CD8-positive, alpha-beta T cell (primary cell): ENCODE measurements at regions of chr1 and their contacts with region 1.

Region 1: DNA sequence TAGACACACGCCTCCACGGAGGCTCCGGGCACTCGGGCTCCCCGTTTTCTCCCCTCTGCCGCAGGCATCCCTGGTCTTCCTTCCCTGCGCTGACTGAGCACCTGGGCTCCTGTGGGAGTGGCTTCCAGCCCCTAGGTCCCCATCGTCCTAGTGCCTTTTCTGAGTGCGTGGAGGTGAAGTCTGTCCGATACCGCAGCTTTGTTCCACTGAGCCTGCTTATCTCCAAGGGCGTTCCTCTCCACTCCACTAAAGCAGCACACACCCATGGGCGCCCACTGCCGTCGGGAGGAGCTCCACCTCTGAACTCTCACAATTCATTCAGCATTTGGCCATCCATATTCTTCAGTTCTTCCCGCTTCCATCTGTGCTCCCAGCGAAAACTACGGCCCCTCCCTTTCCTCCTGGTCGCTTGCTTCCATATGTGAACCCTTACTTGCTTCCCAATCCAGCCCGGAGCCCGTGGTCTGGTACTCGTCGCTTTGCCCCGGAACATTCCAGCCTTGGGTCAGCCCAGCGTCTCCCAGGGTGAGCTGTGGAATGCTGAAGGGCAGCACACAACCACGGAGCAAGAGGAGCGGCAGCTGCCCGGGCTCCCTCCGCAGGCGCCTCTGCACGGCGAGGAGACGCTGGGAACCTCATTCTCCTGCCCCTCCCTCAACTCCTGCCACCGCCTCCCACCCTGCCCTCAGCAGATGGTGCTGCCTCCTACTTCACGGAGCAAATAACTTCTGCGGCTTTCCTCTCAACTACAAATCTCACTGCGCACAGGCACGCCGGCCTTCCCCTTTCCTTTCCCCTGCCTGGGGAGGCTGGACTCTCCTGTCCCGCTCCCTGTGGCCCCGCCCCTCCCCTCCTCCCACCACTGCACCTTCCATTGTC is 27.5 kb downstream of the ATP8B2 start:
- DNase-seq: peak in 7 of 9 experiments; percentile 21 to 72 (median 55)
- ATAC-seq: peak; percentile 73
- H3K4me3 ChIP-seq: peak overlapping the region; percentile 45 to 63
- H3K4me3 Mint-ChIP-seq: peak overlapping the region; percentile 91
- H3K27ac ChIP-seq: no peak overlapping the region
- H3K27ac Mint-ChIP-seq: peak overlapping the region; percentile 81
- H3K4me1 ChIP-seq: peaks cover 27% of the 10 kb centered on the region
- H3K4me1 Mint-ChIP-seq: peaks cover 44% of the 10 kb centered on the region
- H3K27me3 ChIP-seq: no peaks in the 10 kb centered on the region
- H3K27me3 Mint-ChIP-seq: no peaks in the 10 kb centered on the region
- CTCF ChIP-seq: no peak

Region 2: GRCh38 chr1:154442006-154442740 is 89.4 kb after region 1 on chr1:
- CTCF ChIA-PET with region 1: interaction called, 4 read pairs
- POLR2A ChIA-PET with region 1: no interaction called
- intact Hi-C with region 1: loop called in 1 of 2 experiments (anchors 1 kb)
- DNase-seq: peak in 3 of 9 experiments; percentile 19 to 42 (median 30)
- ATAC-seq: no peak
- H3K4me3 ChIP-seq: no peak overlapping the region
- H3K4me3 Mint-ChIP-seq: peak overlapping the region; percentile 60
- H3K27ac ChIP-seq: peak overlapping the region in 1 of 2 experiments; percentile 22
- H3K27ac Mint-ChIP-seq: peak overlapping the region; percentile 89
- H3K4me1 ChIP-seq: peaks cover 58% of the 10 kb centered on the region
- H3K4me1 Mint-ChIP-seq: peaks cover 63% of the 10 kb centered on the region
- H3K27me3 ChIP-seq: no peaks in the 10 kb centered on the region
- H3K27me3 Mint-ChIP-seq: no peaks in the 10 kb centered on the region
- CTCF ChIP-seq: peak; percentile 24

Region 3: GRCh38 chr1:154546264-154547063 is 193.6 kb after region 1 on chr1:
- CTCF ChIA-PET with region 1: interaction called, 5 read pairs
- POLR2A ChIA-PET with region 1: no interaction called
- intact Hi-C with region 1: loop called in 1 of 2 experiments (anchors 10 kb)
- DNase-seq: peak; percentile 10 to 72 (median 52)
- ATAC-seq: peak; percentile 97
- H3K4me3 ChIP-seq: no peak overlapping the region
- H3K4me3 Mint-ChIP-seq: no peak overlapping the region
- H3K27ac ChIP-seq: no peak overlapping the region
- H3K27ac Mint-ChIP-seq: no peak overlapping the region
- H3K4me1 ChIP-seq: no peaks in the 10 kb centered on the region
- H3K4me1 Mint-ChIP-seq: peaks cover 15% of the 10 kb centered on the region
- H3K27me3 ChIP-seq: no peaks in the 10 kb centered on the region
- H3K27me3 Mint-ChIP-seq: peaks cover 3% of the 10 kb centered on the region
- CTCF ChIP-seq: peak; percentile 61